ENCODE measurements at regions of chr20 and their contacts with region 1.

Region 1: GRCh38 chr20:34190679-34191090 is 50.5 kb upstream of the ASIP start:
- DNase-seq: peak; percentile 22
- H3K4me3 Mint-ChIP-seq: no peak overlapping the region
- H3K27ac Mint-ChIP-seq: no peak overlapping the region
- H3K4me1 Mint-ChIP-seq: peaks cover 9% of the 10 kb centered on the region
- H3K27me3 Mint-ChIP-seq: peaks cover 16% of the 10 kb centered on the region

Region 2: GRCh38 chr20:34250005-34250404 is 59.3 kb after region 1 on chr20:
- intact Hi-C with region 1: loop called (anchors 5 kb)
- DNase-seq: no peak
- H3K4me3 Mint-ChIP-seq: no peak overlapping the region
- H3K27ac Mint-ChIP-seq: no peak overlapping the region
- H3K4me1 Mint-ChIP-seq: peaks cover 16% of the 10 kb centered on the region
- H3K27me3 Mint-ChIP-seq: no peaks in the 10 kb centered on the region

Region 3: GRCh38 chr20:34334654-34335407 is 144.1 kb after region 1 on chr20:
- intact Hi-C with region 1: no loop called
- DNase-seq: no peak
- H3K4me3 Mint-ChIP-seq: no peak overlapping the region
- H3K27ac Mint-ChIP-seq: peak overlapping the region; percentile 51
- H3K4me1 Mint-ChIP-seq: peaks cover 12% of the 10 kb centered on the region
- H3K27me3 Mint-ChIP-seq: no peaks in the 10 kb centered on the region